ENCODE measurements at regions of chr17 and their contacts with region 1.

Region 1: GRCh38 chr17:7687908-7688807 is at the start of gene WRAP53:
- DNase-seq: peak; percentile 95 to 97 (median 96)
- H3K4me3 ChIP-seq: peak within 1 kb of the TSS; percentile 85 to 99 (median 99)
- H3K4me3 Mint-ChIP-seq: peak within 1 kb of the TSS; percentile 96 to 100
- H3K27ac ChIP-seq: peak within 1 kb of the TSS; percentile 100
- H3K27ac Mint-ChIP-seq: peak within 1 kb of the TSS; percentile 99 to 100 (median 100)
- H3K4me1 ChIP-seq: peaks cover 24 to 35% of the 10 kb centered on the region in 2 donors
- H3K4me1 Mint-ChIP-seq: peaks cover 32% of the 10 kb centered on the region
- H3K27me3 ChIP-seq: no peaks in the 10 kb centered on the region
- H3K27me3 Mint-ChIP-seq: no peaks in the 10 kb centered on the region
- CTCF ChIP-seq: peak; percentile 100
- polyA plus RNA-seq, gene WRAP53: 6.3 to 9.8 (median 9.1) TPM

Region 2: DNA sequence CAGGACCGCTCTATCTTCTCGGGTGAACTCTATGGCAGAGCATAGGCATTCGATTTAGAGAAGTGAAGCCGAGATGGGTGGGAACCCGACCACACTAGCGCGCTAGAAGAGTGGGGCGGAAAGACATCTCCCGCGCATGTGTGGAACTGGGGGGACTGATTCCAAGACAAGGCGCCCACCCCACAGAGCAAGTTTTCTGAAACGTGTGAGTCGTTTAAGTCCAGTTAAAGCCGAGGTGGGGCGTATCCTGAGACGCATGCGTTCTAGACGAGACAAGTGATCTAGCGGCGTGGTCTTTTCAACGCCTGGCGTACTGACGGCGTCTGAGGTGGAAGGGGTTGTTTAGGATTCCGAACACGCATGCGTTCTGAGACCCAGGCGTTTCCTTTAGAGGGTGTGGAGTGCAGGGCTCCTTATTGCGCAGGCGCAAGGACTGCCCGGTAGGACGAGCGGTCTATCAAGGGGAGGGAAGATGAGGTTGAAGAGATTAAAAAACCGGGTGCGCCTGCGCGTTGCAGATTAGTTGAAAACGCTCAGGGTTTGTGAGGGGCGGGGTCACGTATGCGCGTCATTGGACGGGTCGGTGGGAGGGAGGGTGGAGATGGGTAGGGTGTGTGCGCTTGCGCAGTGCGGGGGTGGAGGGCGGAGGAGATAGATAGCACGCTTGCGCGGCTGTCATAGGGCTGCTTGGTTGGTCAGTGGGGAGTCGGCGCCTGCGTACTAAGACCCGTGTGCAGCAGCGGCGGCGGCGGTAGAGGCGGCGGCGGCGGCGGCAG is 381.1 kb before region 1 on chr17 and contains the start of gene EIF5A:
- intact Hi-C with region 1: loop called in 1 of 2 experiments (anchors 10 kb)
- DNase-seq: peak; percentile 100
- H3K4me3 ChIP-seq: peak within 1 kb of the TSS; percentile 66 to 97 (median 72)
- H3K4me3 Mint-ChIP-seq: peak within 1 kb of the TSS; percentile 85 to 93
- H3K27ac ChIP-seq: peak within 1 kb of the TSS; percentile 95 to 96
- H3K27ac Mint-ChIP-seq: peak within 1 kb of the TSS; percentile 96 to 100 (median 99)
- H3K4me1 ChIP-seq: peaks cover 24 to 26% of the 10 kb centered on the region in 2 donors
- H3K4me1 Mint-ChIP-seq: peaks cover 21% of the 10 kb centered on the region
- H3K27me3 ChIP-seq: no peaks in the 10 kb centered on the region
- H3K27me3 Mint-ChIP-seq: peaks cover 0 to 5% (median 4%) of the 10 kb centered on the region in 3 donors
- CTCF ChIP-seq: no peak
- polyA plus RNA-seq, gene EIF5A: 465 to 511 (median 485) TPM

Region 3: DNA sequence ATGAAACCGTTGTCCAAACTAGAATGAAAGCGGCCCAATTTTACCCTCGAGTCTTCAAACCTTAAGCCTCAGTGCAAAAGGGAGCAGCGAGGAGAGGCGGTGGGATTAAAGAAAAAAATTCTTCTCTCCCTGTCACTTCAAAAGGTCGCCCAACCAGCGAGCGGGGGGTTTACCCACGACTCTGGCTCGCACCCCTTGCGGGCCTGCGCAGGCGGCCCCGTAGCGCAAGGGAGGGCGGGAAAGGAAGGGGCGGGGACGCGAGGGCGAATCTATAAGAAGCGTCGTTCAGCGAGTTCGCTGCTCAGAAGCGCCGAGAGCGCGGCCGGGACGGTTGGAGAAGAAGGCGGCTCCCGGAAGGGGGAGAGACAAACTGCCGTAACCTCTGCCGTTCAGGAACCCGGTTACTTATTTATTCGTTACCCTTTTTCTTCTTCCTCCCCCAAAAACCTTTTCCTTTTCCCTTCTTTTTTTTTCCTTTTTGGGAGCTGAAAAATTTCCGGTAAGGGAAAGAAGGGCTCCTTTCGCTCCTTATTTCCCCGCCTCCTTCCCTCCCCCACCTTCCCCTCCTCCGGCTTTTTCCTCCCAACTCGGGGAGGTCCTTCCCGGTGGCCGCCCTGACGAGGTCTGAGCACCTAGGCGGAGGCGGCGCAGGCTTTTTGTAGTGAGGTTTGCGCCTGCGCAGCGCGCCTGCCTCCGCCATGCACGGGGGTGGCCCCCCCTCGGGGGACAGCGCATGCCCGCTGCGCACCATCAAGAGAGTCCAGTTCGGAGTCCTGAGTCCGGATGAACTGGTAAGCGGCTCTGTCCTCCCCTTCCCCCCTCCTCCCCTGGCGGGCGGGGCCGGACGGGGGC is 203.9 kb before region 1 on chr17 and contains the start of gene POLR2A:
- intact Hi-C with region 1: loop called in 1 of 2 experiments (anchors 5 kb)
- DNase-seq: peak; percentile 96 to 99 (median 98)
- H3K4me3 ChIP-seq: peak within 1 kb of the TSS; percentile 75 to 90 (median 87)
- H3K4me3 Mint-ChIP-seq: peak within 1 kb of the TSS; percentile 93 to 97
- H3K27ac ChIP-seq: peak within 1 kb of the TSS; percentile 95 to 98
- H3K27ac Mint-ChIP-seq: peak within 1 kb of the TSS; percentile 99 to 100 (median 100)
- H3K4me1 ChIP-seq: peaks cover 39 to 59% of the 10 kb centered on the region in 2 donors
- H3K4me1 Mint-ChIP-seq: peaks cover 70% of the 10 kb centered on the region
- H3K27me3 ChIP-seq: no peaks in the 10 kb centered on the region
- H3K27me3 Mint-ChIP-seq: peaks cover 1 to 3% (median 2%) of the 10 kb centered on the region in 3 donors
- CTCF ChIP-seq: no peak
- polyA plus RNA-seq, gene POLR2A: 12.1 to 27.9 (median 25.4) TPM

Region 4: DNA sequence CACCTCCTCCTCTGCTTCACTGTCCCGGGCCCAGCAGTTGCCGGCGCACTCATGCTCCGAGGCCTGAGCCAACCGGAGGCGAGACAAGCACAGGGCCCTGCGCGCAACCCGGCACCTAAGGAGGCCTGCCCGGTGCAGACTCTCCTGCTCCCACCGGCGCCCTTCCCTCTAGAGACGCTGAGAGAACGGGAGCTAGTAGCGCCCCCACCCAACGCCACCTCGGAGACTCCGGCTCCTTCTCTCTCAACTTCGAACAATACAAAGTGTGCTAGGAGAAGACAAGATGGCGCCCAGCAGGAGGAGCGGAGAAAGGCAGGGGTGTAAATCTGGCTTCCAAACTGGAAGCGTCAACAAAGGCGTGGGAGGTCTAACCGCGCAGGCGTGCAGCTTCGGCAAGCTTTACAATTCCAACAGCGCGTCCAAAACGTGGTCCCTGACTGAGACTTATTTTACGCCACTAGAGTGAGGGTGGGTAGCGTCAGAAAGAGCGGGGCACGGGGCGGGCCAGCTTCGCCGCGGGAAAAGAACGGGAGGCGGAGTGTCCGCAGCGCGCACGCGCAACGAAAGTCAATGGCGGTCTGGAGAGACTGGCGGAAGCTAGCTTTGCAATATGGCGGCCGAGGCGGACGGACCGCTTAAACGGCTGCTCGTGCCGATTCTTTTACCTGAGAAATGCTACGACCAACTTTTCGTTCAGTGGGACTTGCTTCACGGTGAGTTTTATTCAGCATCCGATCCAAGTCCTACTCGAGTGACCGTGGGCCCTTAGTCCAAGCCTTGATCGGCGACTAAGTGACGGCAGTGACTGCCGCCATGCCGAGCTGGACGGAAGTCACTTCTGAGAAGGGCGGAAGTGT is 104.7 kb before region 1 on chr17 and contains the start of gene MPDU1:
- intact Hi-C with region 1: loop called in 1 of 2 experiments (anchors 2 kb)
- DNase-seq: peak; percentile 94 to 98 (median 97)
- H3K4me3 ChIP-seq: peak within 1 kb of the TSS; percentile 59 to 98 (median 60)
- H3K4me3 Mint-ChIP-seq: peak within 1 kb of the TSS; percentile 98 to 99
- H3K27ac ChIP-seq: peak within 1 kb of the TSS; percentile 99
- H3K27ac Mint-ChIP-seq: peak within 1 kb of the TSS; percentile 98 to 100 (median 100)
- H3K4me1 ChIP-seq: peaks cover 74 to 91% of the 10 kb centered on the region in 2 donors
- H3K4me1 Mint-ChIP-seq: peaks cover 70% of the 10 kb centered on the region
- H3K27me3 ChIP-seq: no peaks in the 10 kb centered on the region
- H3K27me3 Mint-ChIP-seq: peaks cover 0 to 6% (median 2%) of the 10 kb centered on the region in 3 donors
- CTCF ChIP-seq: no peak
- polyA plus RNA-seq, gene MPDU1: 100 to 107 (median 103) TPM

Region 5: DNA sequence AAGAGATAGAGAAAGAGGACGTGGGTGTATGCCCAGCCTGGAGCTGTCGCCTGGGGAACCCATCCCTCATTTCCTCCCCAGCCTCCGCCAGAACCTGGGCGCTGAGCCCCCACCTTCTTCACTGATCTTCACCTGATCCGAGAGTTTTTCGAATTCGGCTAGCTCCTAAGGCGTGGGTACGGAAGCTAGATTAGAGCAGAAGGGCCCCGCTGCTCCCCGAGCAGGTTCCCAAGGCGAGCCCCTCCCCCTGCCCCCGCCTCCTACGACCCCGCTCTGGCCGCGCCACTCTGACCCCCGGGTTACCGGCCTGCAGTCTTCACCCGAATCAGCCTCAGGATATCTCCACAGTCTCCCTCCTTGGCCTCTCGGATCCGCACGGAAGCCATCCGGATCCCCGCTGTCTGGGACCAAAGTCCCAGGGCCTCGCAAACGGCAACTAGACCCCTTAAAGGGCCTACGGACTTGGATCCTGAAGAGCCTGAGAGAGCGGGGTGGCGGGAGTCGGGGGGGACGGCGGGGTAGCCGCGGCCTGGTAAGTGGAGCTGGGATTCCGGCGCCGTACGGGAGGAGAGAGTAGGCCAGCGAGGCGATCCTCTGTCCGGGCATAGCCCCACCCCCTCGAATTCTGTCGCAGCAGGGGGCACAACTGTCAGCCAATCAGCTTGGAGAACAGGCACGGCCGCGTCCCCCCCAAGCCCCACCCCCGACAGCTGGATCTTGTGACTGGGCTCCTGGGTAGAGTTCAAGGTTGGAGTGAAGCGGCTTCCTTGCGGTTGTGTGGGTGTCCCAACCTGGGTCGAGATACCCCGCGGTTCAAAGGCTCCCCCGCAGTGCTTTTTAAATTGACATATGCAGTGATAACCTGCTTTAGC is 60.7 kb before region 1 on chr17 and contains the start of gene SAT2:
- intact Hi-C with region 1: loop called (anchors 5 kb)
- DNase-seq: peak; percentile 88 to 92 (median 92)
- H3K4me3 ChIP-seq: peak within 1 kb of the TSS; percentile 69 to 97 (median 80)
- H3K4me3 Mint-ChIP-seq: peak within 1 kb of the TSS; percentile 92 to 93
- H3K27ac ChIP-seq: peak within 1 kb of the TSS; percentile 87 to 94
- H3K27ac Mint-ChIP-seq: peak within 1 kb of the TSS; percentile 93 to 97 (median 95)
- H3K4me1 ChIP-seq: peaks cover 20 to 22% of the 10 kb centered on the region in 2 donors
- H3K4me1 Mint-ChIP-seq: peaks cover 18% of the 10 kb centered on the region
- H3K27me3 ChIP-seq: no peaks in the 10 kb centered on the region
- H3K27me3 Mint-ChIP-seq: no peaks in the 10 kb centered on the region
- CTCF ChIP-seq: no peak
- polyA plus RNA-seq, gene SAT2: 83.4 to 155 (median 89.8) TPM